ENCODE measurements at regions of chr22 and their contacts with region 1.

Region 1: DNA sequence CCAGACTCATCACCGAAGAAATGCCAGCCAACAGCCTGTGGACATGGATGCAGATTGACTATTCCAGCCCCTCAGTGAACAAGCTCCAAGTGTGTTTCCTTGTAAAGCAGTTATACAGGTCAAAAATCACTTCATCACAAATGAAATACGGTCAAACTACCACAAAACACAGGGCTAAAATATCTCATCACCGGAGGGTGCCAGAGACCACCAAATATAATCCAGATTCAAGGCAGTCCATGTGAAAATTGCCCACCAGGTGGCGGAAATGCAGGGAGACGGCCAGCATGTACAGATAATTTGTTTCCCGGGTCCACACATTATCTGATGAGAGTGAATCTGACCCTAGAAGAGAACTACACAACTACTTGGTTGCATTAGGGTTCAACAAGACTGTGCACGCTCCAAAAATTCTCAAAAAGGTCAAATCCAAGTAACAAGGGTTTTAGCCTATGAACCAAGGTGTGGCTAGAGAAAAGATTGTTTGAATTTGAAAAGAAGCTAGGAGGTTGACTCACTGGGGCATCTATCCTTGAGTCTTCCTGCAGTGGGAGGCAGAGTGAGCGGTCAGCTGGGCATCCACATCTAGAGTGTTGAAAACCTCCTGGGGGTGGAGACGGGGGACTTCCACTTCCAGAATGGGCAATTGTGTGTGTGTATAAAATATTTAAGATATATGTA is 71.7 kb downstream of the IGLL5 start:
- DNase-seq: peak; percentile 92
- H3K4me3 ChIP-seq: no peak overlapping the region
- H3K27ac ChIP-seq: no peak overlapping the region
- H3K4me1 ChIP-seq: peaks cover 0 to 5% (median 2%) of the 10 kb centered on the region in 4 donors
- H3K27me3 ChIP-seq: peaks cover 0 to 23% (median 4%) of the 10 kb centered on the region in 4 donors
- CTCF ChIP-seq: peak; percentile 90 to 96 (median 95)
- EP300 ChIP-seq: no peak
- POLR2A ChIP-seq: no peak

Region 2: GRCh38 chr22:22463855-22464540 is 495.3 kb before region 1 on chr22:
- intact Hi-C with region 1: loop called (anchors 10 kb)
- DNase-seq: no peak
- H3K4me3 ChIP-seq: no peak overlapping the region
- H3K27ac ChIP-seq: no peak overlapping the region
- H3K4me1 ChIP-seq: no peaks in the 10 kb centered on the region
- H3K27me3 ChIP-seq: peaks cover 0 to 66% (median 9%) of the 10 kb centered on the region in 4 donors
- CTCF ChIP-seq: peak; percentile 51 to 62 (median 62)
- EP300 ChIP-seq: no peak
- POLR2A ChIP-seq: no peak

Region 3: GRCh38 chr22:22702237-22703202 is 256.8 kb before region 1 on chr22:
- intact Hi-C with region 1: no loop called
- DNase-seq: no peak
- H3K4me3 ChIP-seq: no peak overlapping the region
- H3K27ac ChIP-seq: no peak overlapping the region
- H3K4me1 ChIP-seq: no peaks in the 10 kb centered on the region
- H3K27me3 ChIP-seq: no peaks in the 10 kb centered on the region
- CTCF ChIP-seq: no peak
- EP300 ChIP-seq: no peak
- POLR2A ChIP-seq: no peak

Region 4: DNA sequence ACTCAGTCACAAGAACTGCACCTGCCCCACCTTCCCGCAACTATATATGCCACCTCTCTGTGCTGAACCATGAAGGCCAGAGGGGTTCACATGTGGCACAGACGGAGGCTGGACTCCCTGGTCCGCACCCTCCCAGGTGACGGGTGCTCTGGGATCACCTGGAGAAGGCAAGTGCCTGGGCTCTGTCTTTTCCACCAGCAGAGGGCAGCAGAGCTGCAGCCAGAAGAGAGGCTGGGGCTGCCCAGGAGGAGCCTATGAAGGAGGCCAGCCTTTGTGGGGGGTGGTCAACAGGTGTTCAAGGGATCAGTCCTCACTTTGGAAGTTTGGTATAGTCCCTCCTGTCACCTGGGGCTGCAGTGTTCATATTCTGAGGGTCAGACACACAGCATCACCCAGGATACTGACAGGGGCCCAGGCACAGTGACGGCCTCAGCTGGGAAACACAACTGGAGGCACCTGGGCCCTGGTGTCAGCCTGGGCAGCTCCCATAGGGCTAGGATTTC is 110.9 kb before region 1 on chr22:
- intact Hi-C with region 1: loop called (anchors 5 kb)
- DNase-seq: peak; percentile 91
- H3K4me3 ChIP-seq: no peak overlapping the region
- H3K27ac ChIP-seq: no peak overlapping the region
- H3K4me1 ChIP-seq: no peaks in the 10 kb centered on the region
- H3K27me3 ChIP-seq: peaks cover 0 to 31% (median 4%) of the 10 kb centered on the region in 4 donors
- CTCF ChIP-seq: peak; percentile 73 to 82 (median 75)
- EP300 ChIP-seq: no peak
- POLR2A ChIP-seq: no peak

Region 5: GRCh38 chr22:23128269-23129108 is 169.2 kb after region 1 on chr22:
- intact Hi-C with region 1: loop called (anchors 1 kb)
- DNase-seq: no peak
- H3K4me3 ChIP-seq: no peak overlapping the region
- H3K27ac ChIP-seq: no peak overlapping the region
- H3K4me1 ChIP-seq: peaks cover 5 to 19% (median 7%) of the 10 kb centered on the region in 4 donors
- H3K27me3 ChIP-seq: no peaks in the 10 kb centered on the region
- CTCF ChIP-seq: peak; percentile 73 to 86 (median 83)
- EP300 ChIP-seq: no peak
- POLR2A ChIP-seq: no peak

Region 6: DNA sequence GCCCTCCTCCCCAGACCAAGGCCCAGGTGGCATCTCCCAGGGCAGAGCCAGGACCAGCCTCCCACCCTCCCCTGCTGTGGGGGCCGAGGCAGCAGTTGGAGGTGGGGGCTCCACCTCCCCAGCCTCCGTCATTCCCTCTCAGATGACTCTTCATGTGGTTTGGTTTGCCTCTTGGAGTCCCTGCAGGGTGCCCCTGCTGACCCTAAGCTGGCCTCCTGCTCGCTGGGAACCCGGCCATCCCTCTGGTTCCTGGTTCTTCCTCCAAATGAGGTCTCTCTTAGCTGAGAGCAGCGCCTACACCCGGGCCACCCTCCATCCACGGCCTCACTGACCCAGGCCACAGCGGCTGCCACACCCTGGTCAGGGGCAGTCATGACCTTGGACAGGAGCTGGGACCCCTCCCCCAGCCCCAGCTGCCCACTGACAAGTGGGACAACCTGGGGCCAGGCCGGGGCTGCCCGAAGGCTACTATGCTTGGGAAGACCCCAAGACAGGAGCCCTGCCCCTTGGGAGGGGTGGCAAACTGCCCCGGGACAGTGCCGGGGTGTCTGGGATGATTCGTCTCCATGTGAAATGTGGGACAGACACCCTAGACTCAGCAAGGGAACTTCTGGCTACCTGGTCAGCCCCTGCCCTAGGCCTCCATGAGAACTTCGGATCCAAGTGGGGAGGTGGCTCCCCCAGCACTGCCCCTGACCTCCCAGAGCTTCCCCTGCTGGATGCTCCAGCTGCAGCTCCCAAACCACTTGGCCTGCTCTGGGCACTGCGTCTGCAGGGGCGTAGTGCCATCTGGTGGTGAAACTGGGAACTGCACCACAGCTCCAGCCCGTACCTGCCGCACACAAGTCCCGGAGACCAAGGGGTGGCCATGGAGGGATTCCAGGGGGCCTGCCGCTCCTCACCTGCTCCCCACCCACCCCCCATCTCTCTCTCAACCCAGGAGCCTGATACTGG is 426.3 kb after region 1 on chr22:
- intact Hi-C with region 1: loop called (anchors 5 kb)
- DNase-seq: peak; percentile 96
- H3K4me3 ChIP-seq: no peak overlapping the region
- H3K27ac ChIP-seq: no peak overlapping the region
- H3K4me1 ChIP-seq: peaks cover 0 to 23% (median 11%) of the 10 kb centered on the region in 4 donors
- H3K27me3 ChIP-seq: peaks cover 0 to 17% (median 0%) of the 10 kb centered on the region in 4 donors
- CTCF ChIP-seq: peak in 2 of 3 experiments; percentile 97
- EP300 ChIP-seq: no peak
- POLR2A ChIP-seq: no peak

Measured in esophagus muscularis mucosa (tissue), 4 donors.